ENCODE measurements at regions of chr1 and their contacts with region 1.

Region 1: GRCh38 chr1:210400043-210400840 is 71.5 kb downstream of the HHAT start:
- DNase-seq: peak in 1 of 2 donors; percentile 26
- ATAC-seq: peak; percentile 57 to 71 (median 67)
- H3K4me3 ChIP-seq: no peak overlapping the region
- H3K27ac ChIP-seq: no peak overlapping the region
- H3K4me1 ChIP-seq: no peaks in the 10 kb centered on the region
- H3K27me3 ChIP-seq: no peaks in the 10 kb centered on the region
- CTCF ChIP-seq: peak; percentile 56

Region 2: GRCh38 chr1:210143465-210144062 is 256.7 kb before region 1 on chr1:
- intact Hi-C with region 1: loop called in 1 of 2 experiments (anchors 5 kb)
- DNase-seq: peak; percentile 69 to 71
- ATAC-seq: no peak
- H3K4me3 ChIP-seq: no peak overlapping the region
- H3K27ac ChIP-seq: no peak overlapping the region
- H3K4me1 ChIP-seq: no peaks in the 10 kb centered on the region
- H3K27me3 ChIP-seq: peaks cover 0 to 2% (median 0%) of the 10 kb centered on the region in 3 donors
- CTCF ChIP-seq: peak; percentile 67

Region 3: DNA sequence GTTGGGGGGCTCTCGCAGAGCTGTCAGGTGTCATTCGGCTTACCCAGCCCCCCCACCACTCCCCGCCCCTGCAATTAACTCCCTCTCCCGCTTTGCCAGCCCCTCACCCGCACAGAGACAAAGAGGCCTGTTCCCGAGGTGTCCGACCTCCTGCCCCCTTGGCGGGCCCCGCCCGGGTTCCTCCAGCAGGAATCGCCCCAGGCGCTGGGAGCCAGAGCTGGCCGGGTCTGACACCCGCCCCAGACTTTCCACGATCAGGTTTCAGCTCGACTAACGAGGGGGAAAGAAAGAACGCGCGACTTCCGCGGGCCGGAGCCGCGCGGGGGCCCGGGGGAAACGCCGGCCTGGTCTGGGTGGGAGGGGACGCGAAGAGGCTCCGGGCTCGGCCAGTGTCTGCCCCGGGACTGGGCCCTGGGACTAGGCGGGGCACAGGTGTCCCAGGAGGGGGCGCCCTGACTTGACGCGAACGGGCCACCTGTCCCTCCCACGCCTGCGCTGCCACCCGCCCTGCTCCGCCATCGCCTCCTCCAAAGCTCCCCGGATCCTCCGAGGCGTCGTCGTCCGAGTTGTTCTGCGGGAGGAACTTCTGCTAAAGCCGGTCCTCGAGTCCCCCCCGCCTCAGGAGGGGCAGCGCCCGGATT is 107.9 kb before region 1 on chr1:
- intact Hi-C with region 1: no loop called
- DNase-seq: peak; percentile 55 to 79
- ATAC-seq: peak; percentile 84 to 94 (median 90)
- H3K4me3 ChIP-seq: peak overlapping the region; percentile 69
- H3K27ac ChIP-seq: peak overlapping the region; percentile 66
- H3K4me1 ChIP-seq: peaks cover 12% of the 10 kb centered on the region
- H3K27me3 ChIP-seq: no peaks in the 10 kb centered on the region
- CTCF ChIP-seq: peak; percentile 32

Region 4: GRCh38 chr1:210792245-210793102 is 392.2 kb after region 1 on chr1:
- intact Hi-C with region 1: no loop called
- DNase-seq: no peak
- ATAC-seq: no peak
- H3K4me3 ChIP-seq: no peak overlapping the region
- H3K27ac ChIP-seq: no peak overlapping the region
- H3K4me1 ChIP-seq: no peaks in the 10 kb centered on the region
- H3K27me3 ChIP-seq: peaks cover 0 to 3% (median 0%) of the 10 kb centered on the region in 3 donors
- CTCF ChIP-seq: no peak

Region 5: GRCh38 chr1:211476200-211476849 is 1076.1 kb after region 1 on chr1:
- intact Hi-C with region 1: loop called in 1 of 2 experiments (anchors 10 kb)
- DNase-seq: peak; percentile 56 to 67
- ATAC-seq: peak in 2 of 4 donors; percentile 64 to 65
- H3K4me3 ChIP-seq: no peak overlapping the region
- H3K27ac ChIP-seq: no peak overlapping the region
- H3K4me1 ChIP-seq: no peaks in the 10 kb centered on the region
- H3K27me3 ChIP-seq: peaks cover 0 to 17% (median 3%) of the 10 kb centered on the region in 3 donors
- CTCF ChIP-seq: peak; percentile 70

Region 6: GRCh38 chr1:211514030-211514754 is 1114.0 kb after region 1 on chr1:
- intact Hi-C with region 1: loop called in 1 of 2 experiments (anchors 10 kb)
- DNase-seq: peak; percentile 74 to 84
- ATAC-seq: peak; percentile 82 to 92 (median 84)
- H3K4me3 ChIP-seq: no peak overlapping the region
- H3K27ac ChIP-seq: no peak overlapping the region
- H3K4me1 ChIP-seq: no peaks in the 10 kb centered on the region
- H3K27me3 ChIP-seq: peaks cover 0 to 11% (median 0%) of the 10 kb centered on the region in 3 donors
- CTCF ChIP-seq: peak; percentile 66

Measured in psoas muscle (tissue), 8 donors.